Mucosa of descending colon (tissue), 3 donors: ENCODE measurements at regions of chr4 and their contacts with region 1.

Region 1: DNA sequence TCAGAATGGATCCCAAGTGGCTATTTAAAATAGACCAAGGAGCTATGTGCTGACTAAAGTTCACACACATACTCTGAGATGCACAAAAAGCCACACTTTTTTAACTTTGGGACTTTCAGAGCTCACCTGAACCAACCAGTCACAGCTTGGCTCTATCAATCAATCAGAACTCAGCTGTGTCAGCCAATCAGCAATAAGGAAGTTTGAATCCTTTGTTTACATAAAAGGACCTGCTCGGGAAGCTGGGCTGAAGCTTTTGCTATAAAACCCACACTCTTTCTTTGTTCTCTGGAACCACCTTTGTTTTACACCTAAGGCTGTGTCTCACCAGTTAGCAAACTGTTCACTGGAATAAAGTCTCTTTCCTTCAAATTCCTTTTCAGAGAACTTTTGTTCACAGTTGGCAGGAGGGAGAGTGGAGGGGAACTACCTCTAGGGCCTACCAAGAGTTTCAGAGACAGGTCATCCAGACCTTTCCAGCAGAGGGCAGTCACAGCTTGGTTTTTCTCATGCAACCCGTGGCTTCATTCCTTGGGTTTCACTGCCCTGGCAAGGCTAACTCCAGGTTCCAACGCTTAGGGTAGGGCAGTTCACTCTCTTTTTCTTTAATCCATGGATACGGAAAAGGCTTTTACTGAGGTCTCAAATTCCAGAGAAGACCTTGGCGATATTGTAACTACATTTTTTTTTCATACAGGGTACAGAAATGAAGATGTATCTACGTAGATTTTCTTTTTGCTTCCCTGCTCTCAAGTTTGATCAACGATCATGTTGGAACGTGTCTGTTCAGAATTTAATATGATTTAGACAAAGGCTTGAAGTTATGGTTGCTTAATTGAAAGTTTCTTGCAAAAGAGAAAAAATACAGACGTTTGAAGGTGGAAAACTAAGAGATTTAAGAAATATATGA is 80.7 kb downstream of the GPRIN3 start:
- DNase-seq: peak in 2 of 3 donors; percentile 77 to 97
- ATAC-seq: peak; percentile 99
- H3K4me3 ChIP-seq: no peak overlapping the region
- H3K4me1 ChIP-seq: no peaks in the 10 kb centered on the region
- CTCF ChIP-seq: peak; percentile 42

Region 2: DNA sequence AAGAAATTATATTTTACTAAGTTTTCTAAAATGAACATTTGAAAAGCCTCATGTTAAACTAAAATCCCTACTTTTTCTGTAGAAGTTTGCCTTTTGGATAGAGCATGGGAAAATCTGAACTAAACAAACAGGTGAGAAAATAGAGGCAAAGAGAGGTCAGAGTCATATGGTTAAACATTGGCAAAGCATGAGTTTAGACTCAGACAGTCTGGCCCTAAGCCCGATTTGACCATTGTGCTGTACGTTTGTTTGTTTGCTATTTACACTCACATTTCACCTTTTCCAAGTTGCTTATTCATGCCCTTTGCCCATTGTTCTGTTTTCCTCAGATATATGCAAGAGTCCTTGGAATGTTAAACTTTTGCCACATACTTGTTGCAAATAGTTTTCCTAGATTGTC is 30.2 kb before region 1 on chr4:
- intact Hi-C with region 1: no loop called
- DNase-seq: peak in 1 of 3 donors; percentile 30
- ATAC-seq: peak; percentile 60
- H3K4me3 ChIP-seq: no peak overlapping the region
- H3K4me1 ChIP-seq: peaks cover 14% of the 10 kb centered on the region
- CTCF ChIP-seq: no peak

Region 3: DNA sequence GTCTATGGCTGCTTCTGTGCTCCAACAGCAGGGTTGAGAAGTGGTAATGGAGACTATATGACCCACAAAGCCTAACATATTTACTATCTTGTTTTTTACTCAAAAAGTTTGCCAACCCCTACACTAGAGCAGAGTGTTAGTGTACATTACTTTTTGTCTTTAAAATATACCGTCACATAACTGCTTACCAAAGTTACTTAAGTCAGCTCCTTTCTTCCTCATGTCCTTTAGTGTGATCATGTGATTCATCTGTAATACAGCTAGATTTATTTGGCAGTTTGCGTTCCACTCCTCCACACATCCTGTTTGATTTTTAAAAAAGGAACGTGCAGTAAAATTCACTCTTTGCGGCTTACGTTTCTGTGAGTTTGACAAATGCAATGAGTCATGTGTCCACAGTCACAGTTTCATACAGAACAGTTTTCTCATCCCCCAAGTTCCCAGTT is 243.0 kb after region 1 on chr4:
- intact Hi-C with region 1: no loop called
- DNase-seq: no peak
- ATAC-seq: peak; percentile 54
- H3K4me3 ChIP-seq: no peak overlapping the region
- H3K4me1 ChIP-seq: no peaks in the 10 kb centered on the region
- CTCF ChIP-seq: no peak

Region 4: DNA sequence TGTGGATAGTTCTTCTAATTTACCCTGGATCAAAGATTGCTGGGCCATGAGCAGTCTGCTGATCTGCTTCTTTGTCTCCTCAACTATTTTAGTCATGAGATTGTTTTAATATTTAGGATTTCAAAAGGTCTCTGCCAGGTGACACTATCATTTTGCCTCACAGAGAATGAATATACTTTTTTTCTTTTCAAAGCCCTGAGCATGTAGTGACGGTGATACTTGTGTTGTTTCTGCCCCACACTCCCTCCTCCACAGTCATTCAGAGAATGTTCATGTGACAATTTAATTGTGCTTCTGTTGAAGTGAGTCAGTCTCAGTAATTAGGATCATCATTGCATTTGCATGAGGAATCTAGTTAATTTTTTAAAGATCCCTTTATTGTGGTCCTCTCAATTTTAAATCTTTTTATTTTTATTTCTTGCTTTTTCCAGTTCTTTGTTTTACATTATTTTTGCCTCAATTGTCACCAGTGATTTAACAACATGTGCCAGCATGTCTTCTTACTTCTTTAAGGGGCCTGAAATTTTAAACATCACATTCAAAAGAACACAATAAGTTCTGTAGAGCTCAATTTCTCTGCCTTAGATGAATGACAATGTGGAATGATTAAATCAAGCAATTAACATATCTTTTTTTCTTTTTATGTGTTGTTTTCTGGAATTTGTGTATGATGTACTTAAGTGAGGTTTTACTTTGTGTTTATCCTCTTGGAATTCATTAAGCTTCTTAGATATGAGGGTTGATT is 680.0 kb after region 1 on chr4:
- intact Hi-C with region 1: loop called in 1 of 2 experiments (anchors 10 kb)
- DNase-seq: no peak
- ATAC-seq: no peak
- H3K4me3 ChIP-seq: no peak overlapping the region
- H3K4me1 ChIP-seq: no peaks in the 10 kb centered on the region
- CTCF ChIP-seq: no peak